ENCODE measurements at regions of chr3 and their contacts with region 1.

Region 1: GRCh38 chr3:187041362-187042307 is 97.7 kb downstream of the RPL39L start:
- DNase-seq: peak; percentile 61
- ATAC-seq: peak; percentile 92
- H3K4me3 Mint-ChIP-seq: peak overlapping the region; percentile 40
- H3K27ac Mint-ChIP-seq: peak overlapping the region; percentile 95
- H3K4me1 Mint-ChIP-seq: peaks cover 81% of the 10 kb centered on the region
- H3K27me3 Mint-ChIP-seq: no peaks in the 10 kb centered on the region

Region 2: DNA sequence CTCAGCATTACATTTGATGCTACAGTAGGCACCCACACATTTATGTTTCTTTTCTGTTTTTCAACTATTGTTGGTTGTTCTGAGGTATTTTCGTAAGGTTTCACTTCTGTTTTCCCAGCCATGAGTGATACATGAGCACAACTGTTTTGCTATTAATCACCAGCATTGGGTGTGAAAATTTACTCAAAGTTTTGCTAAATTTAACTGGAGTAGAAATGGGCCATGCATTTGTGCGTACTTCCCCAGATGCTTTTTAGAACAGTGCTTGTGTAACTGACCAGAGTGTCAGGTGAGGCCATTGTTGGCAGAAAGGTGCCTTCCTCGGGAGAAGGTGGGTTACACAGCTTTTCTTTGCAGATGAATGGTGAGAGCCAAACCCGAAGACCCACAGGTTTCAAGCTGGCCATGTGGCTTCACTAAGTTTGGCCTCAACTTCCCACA is 40.9 kb before region 1 on chr3:
- CTCF ChIA-PET with region 1: no interaction called
- POLR2A ChIA-PET with region 1: no interaction called
- intact Hi-C with region 1: loop called in 1 of 2 experiments (anchors 5 kb)
- DNase-seq: peak; percentile 54
- ATAC-seq: peak; percentile 92
- H3K4me3 Mint-ChIP-seq: peak overlapping the region; percentile 27
- H3K27ac Mint-ChIP-seq: peak overlapping the region; percentile 89
- H3K4me1 Mint-ChIP-seq: peaks cover 66% of the 10 kb centered on the region
- H3K27me3 Mint-ChIP-seq: no peaks in the 10 kb centered on the region

Region 3: DNA sequence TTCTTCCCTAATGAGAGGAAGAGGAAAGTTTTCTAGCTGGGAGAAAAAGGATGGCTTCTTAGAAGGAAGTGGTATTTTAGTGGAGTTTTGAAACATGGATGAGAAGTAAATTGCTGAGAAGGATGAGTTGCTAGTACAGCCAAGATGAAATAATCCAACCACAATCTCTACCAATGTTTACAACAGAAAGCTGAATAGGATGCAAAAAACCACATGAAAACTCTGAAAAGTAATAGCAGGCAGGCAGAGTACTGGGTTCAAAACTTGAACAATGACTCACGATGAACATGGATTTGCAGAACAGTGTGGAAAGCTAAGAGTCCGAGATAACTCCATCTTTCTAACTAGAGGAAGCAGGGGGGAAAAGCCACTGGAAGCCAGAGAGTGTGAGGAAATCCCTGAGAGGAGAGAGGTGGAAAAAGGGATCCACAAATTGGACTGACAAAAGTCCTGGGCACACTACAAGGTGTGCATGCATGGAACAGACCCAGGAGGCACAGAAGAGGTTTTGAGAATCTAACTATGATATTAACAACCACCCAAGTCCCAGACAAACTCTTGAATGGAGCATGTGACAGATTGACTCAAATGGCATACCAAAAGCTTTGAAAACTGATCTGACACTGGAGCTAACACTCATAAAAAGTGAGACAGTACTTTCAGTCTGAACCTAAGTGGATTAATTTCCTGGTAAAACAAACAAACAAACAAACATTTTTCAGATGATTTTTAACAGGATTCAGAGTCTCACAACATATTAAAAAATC is 34.6 kb before region 1 on chr3:
- CTCF ChIA-PET with region 1: no interaction called
- POLR2A ChIA-PET with region 1: no interaction called
- intact Hi-C with region 1: loop called (anchors 2 to 5 kb)
- DNase-seq: no peak
- ATAC-seq: peak; percentile 81
- H3K4me3 Mint-ChIP-seq: no peak overlapping the region
- H3K27ac Mint-ChIP-seq: peak overlapping the region; percentile 67
- H3K4me1 Mint-ChIP-seq: peaks cover 55% of the 10 kb centered on the region
- H3K27me3 Mint-ChIP-seq: no peaks in the 10 kb centered on the region

Measured in activated CD4-positive, alpha-beta T cell treated with anti-CD3 and anti-CD28 coated beads for 36 hours (primary cell).